Common myeloid progenitor, CD34-positive (primary cell): ENCODE measurements at regions of chr4 and their contacts with region 1.

Region 1: DNA sequence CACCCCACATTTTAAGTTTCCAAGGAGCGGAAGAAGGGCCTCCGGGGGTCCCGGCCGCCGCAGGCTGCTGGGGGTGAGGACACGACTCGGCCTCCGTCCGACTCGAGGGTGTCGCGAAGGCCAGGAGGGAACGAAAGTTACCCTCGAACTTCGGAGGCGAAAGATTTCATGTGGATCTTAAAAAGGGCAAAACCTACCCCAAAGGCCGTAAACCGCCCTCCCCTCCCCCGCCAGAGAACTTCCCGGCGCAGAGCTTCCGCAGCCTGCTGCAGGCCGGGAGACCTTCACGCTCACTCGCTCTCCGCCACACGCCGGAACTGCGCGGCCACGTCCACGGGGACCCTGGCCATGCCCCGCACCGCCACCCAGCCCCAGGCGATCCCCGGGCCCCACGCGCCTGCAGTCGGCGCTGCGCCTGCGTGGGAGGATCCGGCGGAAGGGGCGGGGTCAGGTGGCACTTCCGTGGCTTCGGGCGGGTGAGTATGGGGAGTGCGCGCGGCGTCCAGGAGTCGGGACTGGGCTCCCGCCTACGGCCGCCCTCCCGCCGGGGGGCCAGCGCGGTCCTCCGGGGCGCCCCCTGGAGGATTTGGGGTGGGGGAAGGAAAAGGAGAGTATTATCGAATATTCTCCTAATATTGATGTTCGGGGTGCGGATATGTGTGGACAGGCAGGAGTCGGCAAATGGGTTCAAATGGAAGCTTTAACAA is at the start of gene MMAA:
- DNase-seq: peak; percentile 96 to 97 (median 97)
- H3K4me3 ChIP-seq: peak within 1 kb of the TSS; percentile 86 to 98 (median 88)
- H3K27ac ChIP-seq: peak within 1 kb of the TSS; percentile 91 to 97
- H3K4me1 ChIP-seq: peaks cover 7 to 34% (median 16%) of the 10 kb centered on the region in 4 experiments
- H3K27me3 ChIP-seq: no peaks in the 10 kb centered on the region

Region 2: DNA sequence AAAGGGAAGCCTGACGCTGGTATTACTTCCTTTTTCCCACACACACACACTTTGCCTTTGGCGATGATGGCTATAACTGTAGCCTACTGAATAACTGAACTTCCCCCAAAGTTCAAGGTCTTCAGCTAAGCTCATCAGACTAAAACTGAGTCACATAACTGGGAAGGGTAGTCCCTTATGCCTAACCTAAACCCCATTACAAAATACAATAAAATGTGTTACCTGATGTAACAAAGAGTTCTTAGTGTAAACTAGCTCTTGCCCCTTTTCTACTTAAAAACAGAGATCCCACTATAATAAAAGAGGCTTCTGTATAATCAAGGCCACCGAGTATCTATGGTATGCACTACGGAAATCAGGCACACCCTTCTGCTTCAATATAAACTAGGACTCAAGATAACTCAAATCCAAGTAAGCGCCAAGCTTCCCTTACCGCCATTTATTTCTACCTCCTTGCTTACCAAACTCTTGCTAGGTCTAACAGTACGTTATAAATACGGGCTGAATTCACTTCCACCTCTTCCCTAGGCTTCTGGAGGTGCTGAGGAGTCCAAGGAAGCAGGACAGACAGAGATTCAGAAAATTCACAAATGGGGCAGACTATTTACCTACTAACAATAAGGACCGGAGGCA is 441.1 kb before region 1 on chr4:
- CTCF ChIA-PET with region 1: interaction called, 11 read pairs
- POLR2A ChIA-PET with region 1: no interaction called
- DNase-seq: peak in 2 of 3 donors; percentile 61
- H3K4me3 ChIP-seq: peak overlapping the region in 6 of 7 experiments; percentile 76 to 95 (median 86)
- H3K27ac ChIP-seq: peak overlapping the region; percentile 76 to 94
- H3K4me1 ChIP-seq: peaks cover 28 to 35% (median 31%) of the 10 kb centered on the region in 4 experiments
- H3K27me3 ChIP-seq: no peaks in the 10 kb centered on the region

Region 3: DNA sequence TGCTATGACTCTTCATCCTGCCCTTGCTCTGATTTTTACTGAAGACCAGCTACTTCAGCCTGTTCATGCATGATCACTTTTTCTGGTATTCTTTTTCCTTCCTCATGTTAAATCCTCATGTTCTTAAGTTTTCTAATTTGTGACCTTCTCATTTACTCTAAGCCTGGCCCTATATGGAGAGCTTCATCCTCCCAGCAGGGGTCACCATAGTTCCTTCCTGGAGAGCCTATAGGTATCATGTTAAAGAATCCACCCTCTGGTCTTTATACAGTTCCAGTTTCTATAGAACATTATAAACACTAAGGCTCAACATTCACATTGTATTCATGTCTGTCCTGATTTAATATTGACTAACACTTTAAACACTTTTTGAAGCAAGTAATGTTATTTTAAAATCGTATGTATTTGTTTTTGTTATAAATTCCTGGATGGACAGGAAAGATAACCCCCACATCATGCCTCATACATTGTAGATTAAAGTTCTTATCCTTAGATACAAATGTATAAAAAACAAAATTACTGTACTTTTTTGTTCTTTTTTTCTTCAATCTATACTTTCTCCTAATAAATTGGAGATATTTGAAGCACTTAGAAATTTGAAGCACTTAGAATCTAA is 384.9 kb before region 1 on chr4:
- CTCF ChIA-PET with region 1: interaction called, 13 read pairs
- POLR2A ChIA-PET with region 1: interaction called, 3 read pairs
- DNase-seq: peak; percentile 66 to 84 (median 76)
- H3K4me3 ChIP-seq: no peak overlapping the region
- H3K27ac ChIP-seq: no peak overlapping the region
- H3K4me1 ChIP-seq: no peaks in the 10 kb centered on the region
- H3K27me3 ChIP-seq: peaks cover 0 to 2% (median 0%) of the 10 kb centered on the region in 5 experiments